SK-N-SH (cell line): ENCODE measurements at regions of chr10 and their contacts with region 1.

Region 1: GRCh38 chr10:96229568-96230030 is 41.8 kb downstream of the BLNK start:
- DNase-seq: peak; percentile 75
- H3K4me3 ChIP-seq: peak overlapping the region in 1 of 2 experiments; percentile 36; a peak in 1 of 4 replicates
- H3K27ac ChIP-seq: no peak overlapping the region
- H3K4me1 ChIP-seq: no peaks in the 10 kb centered on the region; a peak in 1 of 4 replicates
- H3K27me3 ChIP-seq: no peaks in the 10 kb centered on the region; the same call in 1 of the 2 replicates
- CTCF ChIP-seq: peak; percentile 79
- EP300 ChIP-seq: no peak
- RAD21 ChIP-seq: peak; percentile 59

Region 2: GRCh38 chr10:96244354-96244753 is 14.8 kb after region 1 on chr10:
- CTCF ChIA-PET with region 1: interaction called, 28 read pairs
- POLR2A ChIA-PET with region 1: no interaction called
- DNase-seq: no peak
- H3K4me3 ChIP-seq: no peak overlapping the region
- H3K27ac ChIP-seq: no peak overlapping the region
- H3K4me1 ChIP-seq: no peaks in the 10 kb centered on the region
- H3K27me3 ChIP-seq: no peaks in the 10 kb centered on the region
- CTCF ChIP-seq: no peak
- EP300 ChIP-seq: no peak
- RAD21 ChIP-seq: no peak

Region 3: DNA sequence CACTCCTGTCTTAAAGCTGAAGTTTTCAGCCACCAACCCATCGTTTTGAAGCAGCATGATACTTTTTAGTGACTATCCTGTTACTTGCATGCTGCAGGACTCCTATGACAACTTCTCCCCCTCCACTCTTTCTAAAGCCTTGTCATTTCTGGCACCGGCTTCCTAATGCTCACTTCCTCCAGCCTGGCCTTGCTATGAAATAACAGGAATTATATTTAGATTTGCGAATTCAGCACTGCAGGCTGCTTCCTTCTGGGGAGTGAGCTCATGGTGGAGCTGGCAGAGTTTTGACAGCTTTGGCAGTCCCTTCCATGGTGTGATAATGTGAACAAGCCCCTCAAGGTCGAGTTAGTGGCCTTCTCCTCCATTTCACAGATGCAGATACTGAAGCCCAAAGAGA is 28.3 kb after region 1 on chr10:
- CTCF ChIA-PET with region 1: interaction called, 28 read pairs
- POLR2A ChIA-PET with region 1: no interaction called
- DNase-seq: no peak
- H3K4me3 ChIP-seq: no peak overlapping the region
- H3K27ac ChIP-seq: no peak overlapping the region
- H3K4me1 ChIP-seq: no peaks in the 10 kb centered on the region; a peak in 1 of 4 replicates
- H3K27me3 ChIP-seq: no peaks in the 10 kb centered on the region
- CTCF ChIP-seq: no peak
- EP300 ChIP-seq: no peak
- RAD21 ChIP-seq: no peak

Region 4: DNA sequence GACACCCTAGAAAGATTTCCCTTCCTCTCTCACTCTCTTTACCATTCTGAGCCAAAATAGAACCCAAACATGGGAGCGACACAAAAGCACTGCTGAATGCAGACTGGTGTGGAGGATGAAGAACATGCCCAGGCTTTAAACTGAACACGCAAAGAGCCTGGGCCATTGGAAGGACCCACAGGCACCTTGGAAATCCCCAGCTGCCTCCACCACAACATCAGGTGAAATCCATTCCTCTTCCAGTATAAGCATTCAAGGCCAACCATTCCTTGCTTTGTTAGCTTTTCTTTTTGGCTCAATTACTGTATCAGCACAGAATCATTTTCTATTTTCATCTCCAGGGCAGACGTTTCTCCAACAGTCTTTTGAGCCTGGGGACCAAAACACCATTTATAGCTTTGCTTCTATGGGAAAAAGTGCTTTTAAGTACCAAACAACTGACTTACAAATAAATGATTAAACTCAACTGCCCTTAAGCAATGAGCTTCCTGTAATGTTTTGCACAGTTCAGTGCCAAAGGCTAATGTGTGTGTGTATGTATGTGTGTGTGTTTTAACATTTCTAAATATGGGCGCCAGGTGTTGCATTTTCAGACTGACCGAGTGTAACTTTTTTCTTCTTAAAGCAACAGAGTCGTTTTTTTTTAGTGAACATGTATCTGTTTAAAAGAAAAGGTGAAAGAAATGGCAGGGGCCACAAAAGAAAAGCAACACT is 58.0 kb after region 1 on chr10:
- CTCF ChIA-PET with region 1: interaction called, 70 read pairs
- POLR2A ChIA-PET with region 1: no interaction called
- DNase-seq: no peak
- H3K4me3 ChIP-seq: no peak overlapping the region
- H3K27ac ChIP-seq: no peak overlapping the region
- H3K4me1 ChIP-seq: peaks cover 0 to 2% of the 10 kb centered on the region in 2 experiments; a peak in 2 of 4 replicates
- H3K27me3 ChIP-seq: no peaks in the 10 kb centered on the region
- CTCF ChIP-seq: no peak
- EP300 ChIP-seq: no peak
- RAD21 ChIP-seq: no peak

Region 5: DNA sequence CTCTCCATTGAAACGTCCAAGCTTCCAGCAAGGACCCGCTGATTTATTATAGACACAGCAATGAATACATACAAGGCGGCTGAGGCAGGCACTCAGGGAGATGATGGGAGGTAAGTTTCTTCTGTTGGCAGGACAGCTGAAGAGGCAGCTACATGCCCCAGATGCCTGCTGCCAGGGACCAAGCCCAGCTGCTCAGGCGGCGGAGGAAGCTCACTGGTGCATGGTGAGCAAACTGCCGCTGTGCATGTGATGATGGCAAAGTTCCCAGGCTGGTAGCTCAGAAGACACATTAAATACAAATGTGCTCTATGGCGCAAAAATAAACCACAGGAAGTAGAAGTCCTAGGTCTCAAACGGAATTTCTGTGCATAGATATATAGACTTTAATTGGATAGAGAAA is 76.9 kb after region 1 on chr10:
- CTCF ChIA-PET with region 1: interaction called, 15 read pairs
- POLR2A ChIA-PET with region 1: no interaction called
- DNase-seq: no peak
- H3K4me3 ChIP-seq: no peak overlapping the region
- H3K27ac ChIP-seq: no peak overlapping the region
- H3K4me1 ChIP-seq: no peaks in the 10 kb centered on the region
- H3K27me3 ChIP-seq: no peaks in the 10 kb centered on the region
- CTCF ChIP-seq: no peak
- EP300 ChIP-seq: no peak
- RAD21 ChIP-seq: no peak

Region 6: GRCh38 chr10:96339957-96340904 is 110.6 kb after region 1 on chr10:
- CTCF ChIA-PET with region 1: interaction called, 11 read pairs
- POLR2A ChIA-PET with region 1: no interaction called
- DNase-seq: peak; percentile 45
- H3K4me3 ChIP-seq: peak overlapping the region in 1 of 2 experiments; percentile 20; a peak in 1 of 4 replicates
- H3K27ac ChIP-seq: no peak overlapping the region
- H3K4me1 ChIP-seq: no peaks in the 10 kb centered on the region
- H3K27me3 ChIP-seq: no peaks in the 10 kb centered on the region; the same call in 1 of the 2 replicates
- CTCF ChIP-seq: peak; percentile 75
- EP300 ChIP-seq: no peak
- RAD21 ChIP-seq: peak; percentile 69

Region 7: GRCh38 chr10:96448021-96448457 is 218.4 kb after region 1 on chr10:
- CTCF ChIA-PET with region 1: no interaction called
- POLR2A ChIA-PET with region 1: no interaction called
- DNase-seq: no peak
- H3K4me3 ChIP-seq: no peak overlapping the region
- H3K27ac ChIP-seq: no peak overlapping the region
- H3K4me1 ChIP-seq: no peaks in the 10 kb centered on the region; a peak in 1 of 4 replicates
- H3K27me3 ChIP-seq: no peaks in the 10 kb centered on the region
- CTCF ChIP-seq: no peak
- EP300 ChIP-seq: no peak
- RAD21 ChIP-seq: no peak

Region 8: DNA sequence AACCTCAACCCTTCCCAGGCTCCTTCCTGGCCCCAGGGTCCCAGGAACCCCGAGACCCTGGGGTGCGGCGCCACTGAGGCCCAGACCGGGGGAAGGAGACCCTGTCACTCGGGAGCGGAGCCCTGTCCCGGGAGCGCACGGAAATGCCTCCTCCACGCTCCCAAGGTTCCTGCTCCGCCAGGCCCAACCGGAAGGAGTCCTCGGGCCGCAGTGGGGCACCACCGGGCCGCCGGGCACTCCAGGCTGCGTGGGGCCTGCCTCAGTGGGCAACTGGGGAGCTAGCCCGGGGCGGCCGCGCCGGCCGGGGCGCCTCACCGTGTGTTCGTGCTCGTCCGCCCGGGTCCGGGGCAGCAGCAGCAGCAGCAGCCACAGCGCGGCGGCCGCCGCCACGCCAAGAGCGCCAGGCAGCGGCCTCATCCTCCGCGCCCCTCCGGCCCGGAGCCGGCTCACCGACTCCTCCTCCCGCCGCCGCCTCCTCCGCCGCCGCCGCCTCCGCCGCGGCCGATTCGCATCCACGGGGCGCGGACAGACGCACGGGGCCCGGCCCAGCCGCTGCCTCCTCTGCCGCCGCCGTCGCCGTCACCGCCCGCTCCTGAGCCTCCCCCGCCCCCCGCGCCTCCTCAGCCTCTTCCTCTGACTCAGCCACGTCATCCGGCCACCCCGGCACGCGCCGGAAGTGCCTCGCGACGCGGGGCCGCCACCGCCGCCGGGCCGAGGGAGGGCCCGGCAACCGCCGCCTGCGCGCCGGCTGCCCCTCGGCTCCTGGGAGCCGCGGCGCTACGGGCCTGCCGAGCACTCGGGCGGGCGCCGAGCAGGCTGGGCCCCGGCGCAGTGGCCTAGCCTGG is 357.0 kb after region 1 on chr10 and contains the start of gene TM9SF3:
- CTCF ChIA-PET with region 1: no interaction called
- POLR2A ChIA-PET with region 1: no interaction called
- DNase-seq: peak; percentile 97
- H3K4me3 ChIP-seq: peak within 1 kb of the TSS; percentile 92 to 98
- H3K27ac ChIP-seq: peak within 1 kb of the TSS; percentile 97
- H3K4me1 ChIP-seq: peaks cover 8 to 15% of the 10 kb centered on the region in 2 experiments; a peak in 3 of 4 replicates
- H3K27me3 ChIP-seq: no peaks in the 10 kb centered on the region
- CTCF ChIP-seq: no peak
- EP300 ChIP-seq: peak in 1 of 2 experiments; percentile 20; a peak in 1 of 4 replicates
- RAD21 ChIP-seq: no peak
- polyA plus RNA-seq, gene TM9SF3: 24.9 and 57.0 TPM in 2 replicates